ENCODE measurements at regions of chr2 and their contacts with region 1.

Region 1: GRCh38 chr2:27683390-27684071 is 19.8 kb downstream of the SLC4A1AP start:
- DNase-seq: peak; percentile 55 to 67
- ATAC-seq: peak; percentile 85 to 95
- H3K4me3 ChIP-seq: no peak overlapping the region
- H3K27ac ChIP-seq: peak overlapping the region in 3 of 4 donors; percentile 32 to 42 (median 37)
- H3K4me1 ChIP-seq: no peaks in the 10 kb centered on the region
- H3K27me3 ChIP-seq: no peaks in the 10 kb centered on the region
- CTCF ChIP-seq: peak; percentile 88 to 97 (median 94)
- POLR2A ChIP-seq: no peak

Region 2: GRCh38 chr2:27537287-27537686 is 146.2 kb before region 1 on chr2:
- in situ Hi-C with region 1: no loop called
- intact Hi-C with region 1: no loop called
- DNase-seq: no peak
- ATAC-seq: no peak
- H3K4me3 ChIP-seq: no peak overlapping the region
- H3K27ac ChIP-seq: no peak overlapping the region
- H3K4me1 ChIP-seq: no peaks in the 10 kb centered on the region
- H3K27me3 ChIP-seq: no peaks in the 10 kb centered on the region
- CTCF ChIP-seq: no peak
- POLR2A ChIP-seq: no peak

Region 3: GRCh38 chr2:28452534-28453081 is 769.1 kb after region 1 on chr2:
- in situ Hi-C with region 1: no loop called
- intact Hi-C with region 1: loop called (anchors 2 kb)
- DNase-seq: peak; percentile 54 to 65
- ATAC-seq: peak; percentile 60 to 82
- H3K4me3 ChIP-seq: no peak overlapping the region
- H3K27ac ChIP-seq: no peak overlapping the region
- H3K4me1 ChIP-seq: no peaks in the 10 kb centered on the region
- H3K27me3 ChIP-seq: no peaks in the 10 kb centered on the region
- CTCF ChIP-seq: peak; percentile 92 to 97 (median 96)
- POLR2A ChIP-seq: no peak

Region 4: DNA sequence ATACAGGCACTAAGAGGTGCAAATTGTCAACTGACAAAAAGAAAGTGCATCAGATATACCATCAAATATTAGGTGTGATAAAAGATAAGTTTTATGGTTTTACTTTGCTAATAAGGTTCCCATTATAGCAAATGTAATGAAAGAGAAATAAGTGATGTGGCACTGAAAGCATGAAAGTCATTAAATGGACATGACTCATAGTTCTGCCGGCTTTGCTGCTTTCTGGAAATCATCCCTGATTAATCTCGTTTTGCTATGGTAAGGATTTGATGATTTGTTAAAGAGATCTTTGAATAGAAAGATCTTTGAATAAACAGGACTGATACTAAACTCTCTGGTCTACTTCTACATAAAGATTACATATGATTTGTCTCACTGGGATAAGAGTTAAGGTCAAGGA is 1504.4 kb after region 1 on chr2:
- in situ Hi-C with region 1: no loop called
- intact Hi-C with region 1: loop called (anchors 10 kb)
- DNase-seq: no peak
- ATAC-seq: no peak
- H3K4me3 ChIP-seq: no peak overlapping the region
- H3K27ac ChIP-seq: no peak overlapping the region
- H3K4me1 ChIP-seq: peaks cover 0 to 13% of the 10 kb centered on the region in 2 donors
- H3K27me3 ChIP-seq: no peaks in the 10 kb centered on the region
- CTCF ChIP-seq: no peak
- POLR2A ChIP-seq: no peak

Measured in gastrocnemius medialis (tissue), 4 donors.